Mucosa of descending colon (tissue), 3 donors: ENCODE measurements at regions of chr2 and their contacts with region 1.

Region 1: DNA sequence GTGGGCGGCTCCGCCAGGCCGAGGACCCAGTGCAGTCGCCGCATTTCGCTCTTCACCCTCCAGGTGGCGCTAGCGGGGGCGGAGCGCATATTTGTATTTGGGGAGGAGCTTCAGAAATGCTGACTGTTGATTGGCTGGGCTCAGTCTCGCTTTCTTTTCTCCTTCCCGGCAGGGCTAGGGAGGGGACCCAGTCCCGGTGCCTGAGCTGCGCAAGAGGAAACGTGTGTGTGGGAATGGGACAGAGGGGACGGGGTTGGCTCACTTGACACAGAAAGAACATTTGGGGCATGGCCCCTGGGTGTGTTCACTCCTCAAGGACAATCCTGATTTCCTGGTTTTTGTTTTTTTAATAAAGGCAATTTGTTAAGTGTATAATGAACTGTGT is 20.3 kb upstream of the DNMT3A start:
- DNase-seq: peak; percentile 92 to 97 (median 96)
- ATAC-seq: peak; percentile 99
- H3K4me3 ChIP-seq: peak overlapping the region; percentile 6
- H3K4me1 ChIP-seq: peaks cover 5% of the 10 kb centered on the region
- CTCF ChIP-seq: peak; percentile 99

Region 2: GRCh38 chr2:25521665-25522387 is 159.8 kb after region 1 on chr2:
- intact Hi-C with region 1: loop called in 1 of 2 experiments (anchors 10 kb)
- DNase-seq: peak in 1 of 3 donors; percentile 74
- ATAC-seq: peak; percentile 95
- H3K4me3 ChIP-seq: no peak overlapping the region
- H3K4me1 ChIP-seq: no peaks in the 10 kb centered on the region
- CTCF ChIP-seq: peak; percentile 57